Transverse colon (tissue), 4 donors: ENCODE measurements at regions of chr19 and their contacts with region 1.

Region 1: GRCh38 chr19:52428937-52429336 is at the start of gene ZNF534:
- DNase-seq: no peak
- H3K4me3 ChIP-seq: no peak within 1 kb of the TSS
- H3K27ac ChIP-seq: no peak within 1 kb of the TSS
- H3K4me1 ChIP-seq: no peaks in the 10 kb centered on the region
- H3K27me3 ChIP-seq: no peaks in the 10 kb centered on the region
- CTCF ChIP-seq: no peak
- EP300 ChIP-seq: no peak
- POLR2A ChIP-seq: no peak
- total RNA-seq, gene ZNF534: not detected

Region 2: GRCh38 chr19:50959731-50960500 is 1469.0 kb before region 1 on chr19:
- in situ Hi-C with region 1: no loop called
- intact Hi-C with region 1: loop called (anchors 5 kb)
- DNase-seq: no peak
- H3K4me3 ChIP-seq: no peak overlapping the region
- H3K27ac ChIP-seq: no peak overlapping the region
- H3K4me1 ChIP-seq: no peaks in the 10 kb centered on the region
- H3K27me3 ChIP-seq: peaks cover 11% of the 10 kb centered on the region
- CTCF ChIP-seq: no peak
- EP300 ChIP-seq: no peak
- POLR2A ChIP-seq: no peak